MCF 10A (cell line): ENCODE measurements at regions of chr22 and their contacts with region 1.

Region 1: GRCh38 chr22:22587577-22588188 is 28.6 kb upstream of the PRAME start:
- DNase-seq: no peak
- H3K4me3 Mint-ChIP-seq: no peak overlapping the region
- H3K27ac Mint-ChIP-seq: no peak overlapping the region
- H3K4me1 Mint-ChIP-seq: no peaks in the 10 kb centered on the region
- H3K27me3 Mint-ChIP-seq: peaks cover 87% of the 10 kb centered on the region
- CTCF ChIP-seq: no peak

Region 2: DNA sequence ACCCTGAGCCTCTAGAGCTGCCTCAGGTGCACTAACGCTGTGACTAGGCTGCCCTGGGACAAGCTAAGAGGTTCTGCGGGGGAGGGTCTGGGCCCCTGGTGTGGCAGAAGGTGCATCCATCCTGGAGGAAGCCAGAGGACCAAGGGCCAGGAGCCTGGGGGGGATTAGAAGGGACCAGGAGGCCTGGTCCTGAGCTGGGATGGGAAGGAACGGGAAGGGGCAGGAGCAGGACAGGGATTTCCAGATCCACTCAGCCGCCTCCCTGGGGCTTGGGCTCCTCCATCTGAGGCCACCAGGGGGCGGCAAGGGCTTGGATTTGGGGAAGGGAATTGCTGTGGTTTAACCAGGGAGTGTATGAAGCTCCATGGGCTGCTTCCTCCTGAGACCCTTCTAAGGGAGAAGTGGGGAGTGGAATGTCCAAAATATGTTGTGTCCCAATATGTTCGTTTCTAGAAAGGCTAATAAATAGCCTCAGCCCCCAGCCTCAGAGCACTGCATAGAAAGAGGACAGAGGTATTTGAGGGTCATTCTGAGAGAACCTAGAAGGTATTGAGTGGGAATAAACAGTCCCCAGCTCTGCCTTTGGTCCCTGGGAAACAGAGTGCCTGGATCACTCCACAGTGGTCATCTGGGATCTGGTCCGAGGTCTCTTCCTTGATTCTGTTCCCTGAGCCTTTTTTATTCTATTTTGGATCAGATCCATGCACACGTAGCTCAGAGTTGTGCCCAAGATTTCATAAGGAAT is 11.3 kb before region 1 on chr22:
- CTCF ChIA-PET with region 1: interaction called, 45 read pairs
- POLR2A ChIA-PET with region 1: no interaction called
- intact Hi-C with region 1: no loop called
- DNase-seq: peak; percentile 67
- H3K4me3 Mint-ChIP-seq: no peak overlapping the region
- H3K27ac Mint-ChIP-seq: no peak overlapping the region
- H3K4me1 Mint-ChIP-seq: no peaks in the 10 kb centered on the region
- H3K27me3 Mint-ChIP-seq: peaks cover 65% of the 10 kb centered on the region
- CTCF ChIP-seq: peak; percentile 73

Region 3: DNA sequence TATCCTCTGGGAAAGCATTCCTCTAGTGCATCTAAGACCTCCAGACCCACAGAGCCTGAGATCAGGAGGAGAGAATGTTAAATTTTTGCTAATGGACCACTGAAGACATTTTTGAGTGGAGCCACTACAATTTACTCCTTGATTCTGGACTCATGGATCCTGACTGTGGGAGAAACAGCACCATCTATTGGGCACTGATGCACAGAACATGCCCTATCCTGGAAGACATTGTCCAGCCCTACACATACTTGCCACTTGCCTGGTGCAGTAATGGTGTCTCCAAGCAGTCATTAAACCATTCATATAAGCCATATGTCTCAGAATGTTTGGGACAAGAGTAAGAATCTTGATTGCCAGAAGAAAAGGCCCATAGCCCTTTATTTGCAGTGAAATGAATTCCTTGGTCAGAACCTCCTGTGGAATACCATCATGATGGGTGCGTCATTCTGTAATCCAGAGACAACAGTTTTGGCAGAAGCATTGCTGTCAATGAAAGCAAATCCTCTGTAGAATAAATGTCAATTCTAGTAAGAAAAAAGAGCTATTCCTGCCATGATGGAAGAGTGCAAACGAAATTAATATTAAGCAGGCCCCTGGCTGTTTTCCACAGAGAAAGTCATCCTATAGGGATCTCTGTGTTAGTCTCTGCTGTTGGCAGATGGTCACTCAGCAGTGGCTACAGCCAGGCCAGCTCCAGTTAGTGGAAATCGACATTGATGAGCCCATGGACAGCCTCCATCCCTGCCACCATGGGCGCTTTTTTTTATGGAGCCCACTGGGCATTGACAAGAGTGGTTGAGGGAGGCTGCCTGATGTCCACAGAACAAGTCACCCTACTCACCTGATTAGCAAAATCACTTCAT is 100.2 kb after region 1 on chr22:
- CTCF ChIA-PET with region 1: interaction called, 30 read pairs
- POLR2A ChIA-PET with region 1: no interaction called
- intact Hi-C with region 1: loop called (anchors 5 kb)
- DNase-seq: peak; percentile 63
- H3K4me3 Mint-ChIP-seq: no peak overlapping the region
- H3K27ac Mint-ChIP-seq: no peak overlapping the region
- H3K4me1 Mint-ChIP-seq: peaks cover 11% of the 10 kb centered on the region
- H3K27me3 Mint-ChIP-seq: no peaks in the 10 kb centered on the region
- CTCF ChIP-seq: peak; percentile 71

Region 4: GRCh38 chr22:22748297-22748743 is 160.6 kb after region 1 on chr22:
- CTCF ChIA-PET with region 1: interaction called, 18 read pairs
- POLR2A ChIA-PET with region 1: no interaction called
- intact Hi-C with region 1: no loop called
- DNase-seq: peak; percentile 71
- H3K4me3 Mint-ChIP-seq: no peak overlapping the region
- H3K27ac Mint-ChIP-seq: no peak overlapping the region
- H3K4me1 Mint-ChIP-seq: peaks cover 16% of the 10 kb centered on the region
- H3K27me3 Mint-ChIP-seq: peaks cover 11% of the 10 kb centered on the region
- CTCF ChIP-seq: peak; percentile 88

Region 5: GRCh38 chr22:22836635-22837034 is 249.0 kb after region 1 on chr22:
- CTCF ChIA-PET with region 1: no interaction called
- POLR2A ChIA-PET with region 1: no interaction called
- intact Hi-C with region 1: no loop called
- DNase-seq: peak; percentile 42
- H3K4me3 Mint-ChIP-seq: no peak overlapping the region
- H3K27ac Mint-ChIP-seq: no peak overlapping the region
- H3K4me1 Mint-ChIP-seq: peaks cover 4% of the 10 kb centered on the region
- H3K27me3 Mint-ChIP-seq: peaks cover 78% of the 10 kb centered on the region
- CTCF ChIP-seq: no peak